ENCODE measurements at regions of chr11 and their contacts with region 1.

Region 1: DNA sequence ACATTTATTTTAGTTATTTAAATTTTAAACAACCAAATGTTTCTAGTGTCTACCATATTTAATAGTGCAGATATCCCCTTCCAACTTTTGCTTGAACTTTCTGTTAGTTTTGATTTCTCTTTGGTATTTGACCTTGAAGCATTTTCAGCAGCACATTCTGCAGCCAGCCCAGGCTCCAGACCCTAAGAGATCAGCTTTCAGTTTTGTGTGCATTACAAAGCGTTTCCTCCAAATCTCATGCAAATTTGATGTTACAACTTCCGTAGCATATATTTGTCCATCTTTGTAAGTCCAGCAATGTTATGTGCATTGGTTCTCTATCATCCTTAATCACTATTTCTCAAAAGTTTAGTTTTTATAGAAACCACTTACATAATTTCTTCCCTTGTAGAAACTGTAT is 14.6 kb upstream of the SERGEF start:
- DNase-seq: no peak
- ATAC-seq: no peak
- H3K4me3 ChIP-seq: no peak overlapping the region
- H3K27ac ChIP-seq: no peak overlapping the region
- H3K4me1 ChIP-seq: no peaks in the 10 kb centered on the region
- H3K27me3 ChIP-seq: peaks cover 12% of the 10 kb centered on the region
- CTCF ChIP-seq: no peak

Region 2: DNA sequence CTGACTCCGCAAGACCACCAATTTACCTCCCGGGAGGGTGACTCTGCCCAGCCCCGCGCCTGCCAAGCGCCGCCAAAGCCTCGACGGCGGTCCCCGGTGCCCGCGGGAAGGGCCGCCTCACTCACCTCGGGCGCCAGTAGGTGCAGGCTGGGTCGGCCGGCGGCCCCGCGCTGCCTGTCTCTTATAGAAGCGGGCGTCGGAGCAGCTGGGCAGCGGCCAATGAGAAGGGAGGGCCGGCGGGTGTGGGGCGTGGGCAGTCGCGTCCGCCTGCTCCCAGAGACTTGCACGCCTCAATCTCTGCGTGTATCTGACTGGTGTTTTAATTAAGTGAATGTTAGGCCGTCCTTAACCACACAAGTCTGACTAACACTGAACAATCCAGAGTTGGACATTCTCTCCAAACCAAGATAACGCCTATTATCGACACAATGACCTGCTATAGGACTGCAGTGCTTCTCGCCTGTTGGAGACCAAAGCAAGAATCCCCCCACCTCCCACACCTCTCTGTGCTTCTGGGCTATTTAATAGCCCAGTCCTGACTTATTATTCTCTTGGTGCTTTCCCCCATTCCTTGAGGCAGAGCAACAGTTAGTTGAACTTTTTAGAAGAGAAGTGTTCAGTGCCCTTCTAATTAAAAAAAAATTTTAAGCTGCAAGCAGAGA is 18.8 kb after region 1 on chr11 and contains the start of gene TPH1:
- CTCF ChIA-PET with region 1: no interaction called
- POLR2A ChIA-PET with region 1: interaction called, 12 read pairs
- in situ Hi-C with region 1: no loop called
- intact Hi-C with region 1: no loop called
- DNase-seq: no peak
- ATAC-seq: peak; percentile 91
- H3K4me3 ChIP-seq: peak within 1 kb of the TSS in 1 of 2 experiments; percentile 2; a peak in 1 of 4 replicates
- H3K27ac ChIP-seq: no peak within 1 kb of the TSS
- H3K4me1 ChIP-seq: 0 out of 2 replicates have a peak, but pooled peaks cover 3% of the 10 kb centered on the region
- H3K27me3 ChIP-seq: peaks cover 42% of the 10 kb centered on the region
- CTCF ChIP-seq: no peak
- total RNA-seq, gene TPH1: 0.05 TPM

Measured in Panc1 (cell line).